Gastrocnemius medialis (tissue), 4 donors: ENCODE measurements at regions of chr11 and their contacts with region 1.

Region 1: GRCh38 chr11:64152841-64153691 is 12.8 kb downstream of the MACROD1 start:
- DNase-seq: peak in 1 of 2 donors; percentile 54
- ATAC-seq: peak; percentile 43 to 49
- H3K4me3 ChIP-seq: peak overlapping the region in 1 of 4 donors; percentile 31
- H3K27ac ChIP-seq: peak overlapping the region; percentile 1 to 96 (median 28)
- H3K4me1 ChIP-seq: peaks cover 60 to 78% of the 10 kb centered on the region in 2 donors
- H3K27me3 ChIP-seq: no peaks in the 10 kb centered on the region
- CTCF ChIP-seq: peak; percentile 95 to 100 (median 98)
- POLR2A ChIP-seq: no peak

Region 2: DNA sequence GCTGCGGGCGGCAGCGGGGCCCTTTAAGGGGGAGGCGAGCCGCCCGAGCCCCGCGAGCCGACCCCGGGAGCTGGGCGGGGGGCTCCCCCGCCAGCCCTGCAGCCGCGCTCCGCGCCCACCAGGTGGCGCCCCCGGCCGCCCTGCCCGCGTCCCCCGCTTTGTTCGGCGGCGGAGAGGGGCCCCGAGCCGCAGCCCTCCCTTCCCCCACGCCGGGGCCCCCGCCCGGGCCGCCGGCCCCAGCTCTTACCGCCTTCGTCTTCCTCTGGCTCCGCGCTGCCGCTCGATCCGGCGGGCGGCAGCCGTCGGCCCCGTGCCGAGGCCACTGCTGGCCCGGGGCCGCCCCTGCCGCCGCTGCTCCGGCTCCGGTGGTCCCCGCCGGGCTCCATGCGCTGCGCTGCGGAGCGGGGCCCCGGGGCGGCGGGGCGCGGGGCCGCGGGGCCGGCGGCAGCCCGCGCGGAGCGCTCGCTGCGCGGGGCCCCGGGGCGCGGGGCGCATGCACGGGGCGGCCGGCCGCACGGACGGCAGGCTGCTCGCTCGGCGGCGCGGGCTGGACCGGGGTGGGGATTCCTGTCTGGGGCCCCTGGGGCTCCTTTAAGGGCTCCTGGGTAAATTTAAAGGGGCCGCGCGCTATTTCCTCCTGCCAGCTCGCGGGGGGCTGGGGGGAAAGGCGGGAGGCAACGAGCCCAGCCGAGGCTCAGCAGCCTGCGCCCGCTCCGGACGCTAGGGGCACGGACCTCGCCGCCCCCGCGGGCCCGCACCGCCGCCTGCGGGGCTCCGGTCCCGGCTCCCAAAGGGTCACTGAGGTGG is 384.6 kb before region 1 on chr11 and contains the start of gene ZFTA:
- in situ Hi-C with region 1: no loop called
- intact Hi-C with region 1: loop called (anchors 5 kb)
- DNase-seq: peak in 1 of 2 donors; percentile 31
- ATAC-seq: peak; percentile 60 to 70
- H3K4me3 ChIP-seq: peak within 1 kb of the TSS; percentile 67 to 83 (median 72)
- H3K27ac ChIP-seq: peak within 1 kb of the TSS; percentile 69 to 81 (median 77)
- H3K4me1 ChIP-seq: peaks cover 10 to 13% of the 10 kb centered on the region in 2 donors
- H3K27me3 ChIP-seq: no peaks in the 10 kb centered on the region
- CTCF ChIP-seq: peak in 4 of 5 experiments; percentile 90 to 97 (median 95)
- POLR2A ChIP-seq: no peak
- total RNA-seq, gene ZFTA: 6.9 to 18.6 (median 11.8) TPM

Region 3: GRCh38 chr11:63838678-63839507 is 314.2 kb before region 1 on chr11 and contains the start of gene MARK2:
- in situ Hi-C with region 1: loop called (anchors 25 kb)
- intact Hi-C with region 1: loop called (anchors 2 kb)
- DNase-seq: peak; percentile 97
- ATAC-seq: peak; percentile 86 to 89
- H3K4me3 ChIP-seq: peak within 1 kb of the TSS; percentile 78 to 99 (median 86)
- H3K27ac ChIP-seq: peak within 1 kb of the TSS; percentile 82 to 94 (median 84)
- H3K4me1 ChIP-seq: peaks cover 35 to 40% of the 10 kb centered on the region in 2 donors
- H3K27me3 ChIP-seq: no peaks in the 10 kb centered on the region
- CTCF ChIP-seq: peak in 1 of 5 experiments; percentile 14
- POLR2A ChIP-seq: peak; percentile 87 to 89
- total RNA-seq, gene MARK2: 17.8 to 37.2 (median 30.3) TPM

Region 4: GRCh38 chr11:63993993-63994392 is 159.1 kb before region 1 on chr11:
- in situ Hi-C with region 1: loop called in 2 of 4 experiments (anchors 5 to 10 kb)
- intact Hi-C with region 1: no loop called
- DNase-seq: peak; percentile 48 to 55
- ATAC-seq: peak; percentile 58 to 72
- H3K4me3 ChIP-seq: no peak overlapping the region
- H3K27ac ChIP-seq: peak overlapping the region; percentile 18 to 67 (median 54)
- H3K4me1 ChIP-seq: peaks cover 0 to 6% of the 10 kb centered on the region in 2 donors
- H3K27me3 ChIP-seq: no peaks in the 10 kb centered on the region
- CTCF ChIP-seq: no peak
- POLR2A ChIP-seq: no peak

Region 5: GRCh38 chr11:64000026-64000739 is 152.9 kb before region 1 on chr11:
- in situ Hi-C with region 1: loop called in 3 of 4 experiments (anchors 5 to 10 kb)
- intact Hi-C with region 1: loop called (anchors 1 kb)
- DNase-seq: no peak
- ATAC-seq: peak; percentile 74 to 78
- H3K4me3 ChIP-seq: peak overlapping the region; percentile 7 to 41 (median 33)
- H3K27ac ChIP-seq: peak overlapping the region in 2 of 4 donors; percentile 39 to 51
- H3K4me1 ChIP-seq: peaks cover 18 to 23% of the 10 kb centered on the region in 2 donors
- H3K27me3 ChIP-seq: no peaks in the 10 kb centered on the region
- CTCF ChIP-seq: peak; percentile 71 to 94 (median 92)
- POLR2A ChIP-seq: no peak

Region 6: DNA sequence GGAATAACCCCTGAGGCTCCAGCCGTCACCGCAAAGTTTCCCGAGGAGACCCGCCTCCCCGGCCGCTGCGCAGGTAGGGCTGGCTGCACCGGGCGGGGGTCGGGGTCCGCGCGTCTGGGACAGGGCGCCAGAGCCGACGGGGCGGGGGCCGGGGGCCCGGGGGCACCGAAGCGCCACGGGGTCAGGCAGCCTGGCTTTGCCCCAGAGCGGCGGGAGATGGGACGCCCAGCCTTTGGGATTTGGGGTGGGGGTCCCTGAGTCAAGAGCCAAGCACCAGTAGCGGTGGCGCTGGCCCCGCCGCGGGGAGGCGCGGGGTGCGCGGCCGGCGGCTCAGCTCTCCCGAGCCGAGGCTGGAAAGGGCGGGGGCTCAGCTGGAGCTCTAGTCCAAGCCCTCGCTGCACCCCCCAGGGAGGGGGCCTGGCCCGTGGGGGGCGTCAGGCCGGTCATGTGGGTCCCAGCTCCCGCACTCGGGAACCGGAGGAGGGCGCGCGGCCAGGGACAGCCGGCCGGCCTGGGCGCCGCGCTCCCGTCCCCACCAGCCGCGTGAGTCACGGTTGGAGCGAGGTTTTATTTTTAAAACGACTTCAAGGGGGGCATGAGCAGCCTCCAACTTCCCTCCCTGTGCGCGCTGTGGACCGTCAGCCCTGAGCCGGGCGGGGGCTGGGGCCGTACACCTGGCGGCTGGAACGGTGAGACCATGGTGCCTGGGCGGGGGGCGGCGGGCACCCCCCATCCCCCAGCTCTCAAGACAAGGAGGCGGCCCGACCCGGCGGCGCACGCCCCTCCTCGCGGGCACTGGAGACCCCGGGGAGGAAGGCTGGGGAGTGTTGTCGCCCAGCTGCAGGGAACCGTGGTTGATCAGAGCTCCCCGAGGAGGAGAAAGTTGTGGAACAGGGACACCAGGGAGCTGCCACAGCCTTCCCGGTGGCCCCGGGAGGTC is 116.7 kb before region 1 on chr11:
- in situ Hi-C with region 1: no loop called
- intact Hi-C with region 1: loop called (anchors 2 kb)
- DNase-seq: peak; percentile 28 to 71
- ATAC-seq: peak; percentile 83 to 91
- H3K4me3 ChIP-seq: peak overlapping the region; percentile 49 to 67 (median 56)
- H3K27ac ChIP-seq: peak overlapping the region; percentile 58 to 72 (median 60)
- H3K4me1 ChIP-seq: peaks cover 18 to 27% of the 10 kb centered on the region in 2 donors
- H3K27me3 ChIP-seq: peaks cover 0 to 3% (median 0%) of the 10 kb centered on the region in 3 donors
- CTCF ChIP-seq: peak in 2 of 5 experiments; percentile 16 to 17
- POLR2A ChIP-seq: no peak

Region 7: GRCh38 chr11:64088162-64089026 is 64.7 kb before region 1 on chr11:
- in situ Hi-C with region 1: no loop called
- intact Hi-C with region 1: loop called (anchors 5 kb)
- DNase-seq: no peak
- ATAC-seq: no peak
- H3K4me3 ChIP-seq: no peak overlapping the region
- H3K27ac ChIP-seq: peak overlapping the region in 2 of 4 donors; percentile 9 to 18
- H3K4me1 ChIP-seq: peaks cover 56 to 85% of the 10 kb centered on the region in 2 donors
- H3K27me3 ChIP-seq: no peaks in the 10 kb centered on the region
- CTCF ChIP-seq: peak in 3 of 5 experiments; percentile 11 to 22 (median 17)
- POLR2A ChIP-seq: no peak